Activated T-helper 1 cell treated with anti-CD3 and anti-CD28 coated beads, Interleukin-12 subunit alpha, Interleukin-12 subunit beta, Interleukin-2, Interleukin-4 antibody, amounts not matched to agents 30 ng/mL and 10 ng/mL and 1 ng/mL, durations not matched to agents 14 hours and 24 hours and 36 hours (primary cell): ENCODE measurements at regions of chr7 and their contacts with region 1.

Region 1: DNA sequence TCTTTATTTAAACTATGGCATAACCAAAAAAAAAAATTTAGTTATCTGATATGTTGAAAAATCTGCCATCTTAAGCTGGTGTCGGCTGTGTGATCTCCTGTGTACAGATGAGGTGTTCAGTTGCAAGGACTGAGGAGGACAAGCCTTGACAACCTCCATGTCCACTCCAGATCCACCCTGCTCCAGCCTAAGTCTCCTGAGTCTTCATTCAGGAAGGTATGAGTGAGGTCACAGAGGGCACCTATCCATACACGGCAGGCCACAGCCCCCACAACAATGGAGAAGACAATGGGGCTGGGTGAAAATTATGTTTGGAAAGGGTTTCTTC is 16.1 kb downstream of the TARP start:
- DNase-seq: no peak
- H3K4me3 Mint-ChIP-seq: no peak overlapping the region
- H3K27ac Mint-ChIP-seq: no peak overlapping the region
- H3K4me1 Mint-ChIP-seq: no peaks in the 10 kb centered on the region
- H3K27me3 Mint-ChIP-seq: no peaks in the 10 kb centered on the region

Region 2: GRCh38 chr7:38318803-38319416 is 61.6 kb after region 1 on chr7:
- intact Hi-C with region 1: loop called (anchors 1 kb)
- DNase-seq: no peak
- H3K4me3 Mint-ChIP-seq: peak overlapping the region; percentile 38
- H3K27ac Mint-ChIP-seq: peak overlapping the region; percentile 23
- H3K4me1 Mint-ChIP-seq: peaks cover 14% of the 10 kb centered on the region
- H3K27me3 Mint-ChIP-seq: peaks cover 2% of the 10 kb centered on the region

Region 3: DNA sequence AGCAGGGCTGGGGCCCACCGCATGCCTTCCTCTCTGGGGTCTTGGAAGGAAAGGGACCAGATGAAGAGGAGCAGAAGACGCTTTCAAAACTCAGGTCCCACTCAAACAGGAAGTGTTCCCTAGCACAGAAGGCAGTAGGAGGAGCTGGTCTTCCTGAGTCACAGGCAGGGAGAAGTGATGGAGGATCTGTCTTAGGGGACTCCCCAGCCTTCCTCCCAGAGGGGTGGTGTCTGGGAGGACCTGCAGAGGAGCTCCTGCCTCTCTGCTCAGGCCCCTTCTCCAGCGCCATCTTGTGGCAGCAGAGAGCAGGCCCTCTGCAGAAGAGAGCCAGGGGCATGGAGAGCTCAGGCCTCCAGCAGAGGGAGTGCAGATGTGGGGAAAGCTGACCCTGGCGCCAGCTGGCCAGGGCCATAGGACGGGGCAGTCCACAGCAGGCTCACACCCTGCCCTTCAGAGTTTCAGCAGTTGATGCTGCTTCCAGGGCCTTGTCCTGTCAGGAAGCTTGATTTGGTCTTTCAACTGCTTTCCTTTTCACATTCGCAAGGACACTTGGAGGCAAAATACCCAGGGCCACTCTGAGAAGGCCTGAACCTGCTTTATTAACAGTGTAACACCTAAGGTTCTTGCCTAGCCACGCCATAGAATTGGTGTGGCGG is 78.3 kb after region 1 on chr7:
- intact Hi-C with region 1: loop called (anchors 1 kb)
- DNase-seq: peak; percentile 72
- H3K4me3 Mint-ChIP-seq: peak overlapping the region; percentile 64
- H3K27ac Mint-ChIP-seq: peak overlapping the region; percentile 43
- H3K4me1 Mint-ChIP-seq: peaks cover 35% of the 10 kb centered on the region
- H3K27me3 Mint-ChIP-seq: no peaks in the 10 kb centered on the region